Activated CD4-positive, alpha-beta memory T cell treated with anti-CD3 and anti-CD28 coated beads for 36 hours (primary cell): ENCODE measurements at regions of chr10 and their contacts with region 1.

Region 1: DNA sequence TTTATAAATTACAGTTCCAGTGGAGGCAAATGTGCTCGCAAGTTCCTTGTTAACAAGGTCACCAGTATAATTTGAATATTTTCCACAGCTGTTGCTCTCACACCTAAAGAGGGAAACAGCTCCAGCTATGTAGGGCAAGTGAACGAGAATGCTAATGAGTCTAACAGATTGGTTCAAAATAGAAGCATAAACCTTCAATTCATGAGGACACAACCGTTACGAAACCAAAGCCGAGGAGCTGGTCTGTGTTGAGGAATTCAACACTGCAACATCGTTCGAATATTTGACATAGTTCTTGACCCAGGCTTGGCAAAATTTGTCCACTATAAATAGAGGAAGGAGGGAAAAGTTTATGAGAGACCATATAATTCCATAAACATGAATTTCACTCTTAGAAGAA is 161.3 kb downstream of the KLF6 start:
- DNase-seq: no peak
- H3K4me3 Mint-ChIP-seq: no peak overlapping the region
- H3K27ac Mint-ChIP-seq: peak overlapping the region; percentile 83
- H3K4me1 Mint-ChIP-seq: peaks cover 28% of the 10 kb centered on the region
- H3K27me3 Mint-ChIP-seq: no peaks in the 10 kb centered on the region

Region 2: DNA sequence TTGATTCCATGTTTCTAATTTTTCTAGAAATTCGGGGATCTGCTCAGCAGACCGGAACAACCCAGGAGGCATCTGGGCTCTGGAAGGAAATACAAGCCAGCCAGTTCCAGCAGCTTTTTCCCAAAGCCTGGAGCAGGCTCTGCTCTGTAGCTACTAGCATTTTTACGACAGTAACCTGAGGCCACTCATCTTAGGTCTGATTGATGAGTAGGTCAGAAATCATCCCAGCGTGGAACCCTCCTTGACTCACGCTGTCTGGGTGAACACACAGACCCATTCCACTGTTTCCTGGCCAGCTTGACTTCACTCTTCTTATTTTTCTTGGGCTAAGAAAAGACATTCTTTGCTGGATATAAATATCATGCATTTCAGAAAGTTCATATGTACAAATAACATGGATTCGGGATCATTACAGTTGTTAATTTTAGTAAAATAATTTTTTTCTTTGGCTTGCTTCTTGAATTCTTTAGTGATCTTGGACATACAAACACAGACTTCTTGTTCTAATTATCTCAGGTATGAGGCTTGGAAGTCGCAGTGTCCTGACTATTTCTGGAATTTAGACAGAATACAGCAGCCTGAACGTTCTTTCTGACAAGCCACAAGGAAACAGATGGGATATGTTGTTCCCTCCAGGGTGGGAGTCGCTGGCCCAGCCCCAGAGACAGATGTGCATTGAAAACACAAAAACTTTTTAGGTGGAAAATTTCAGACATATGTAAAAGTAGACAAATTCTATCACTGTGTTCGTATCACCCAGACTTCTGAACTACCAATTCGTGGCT is 396.6 kb before region 1 on chr10:
- CTCF ChIA-PET with region 1: no interaction called
- POLR2A ChIA-PET with region 1: no interaction called
- intact Hi-C with region 1: loop called (anchors 2 kb)
- DNase-seq: no peak
- H3K4me3 Mint-ChIP-seq: no peak overlapping the region
- H3K27ac Mint-ChIP-seq: no peak overlapping the region
- H3K4me1 Mint-ChIP-seq: peaks cover 23% of the 10 kb centered on the region
- H3K27me3 Mint-ChIP-seq: peaks cover 5% of the 10 kb centered on the region

Region 3: DNA sequence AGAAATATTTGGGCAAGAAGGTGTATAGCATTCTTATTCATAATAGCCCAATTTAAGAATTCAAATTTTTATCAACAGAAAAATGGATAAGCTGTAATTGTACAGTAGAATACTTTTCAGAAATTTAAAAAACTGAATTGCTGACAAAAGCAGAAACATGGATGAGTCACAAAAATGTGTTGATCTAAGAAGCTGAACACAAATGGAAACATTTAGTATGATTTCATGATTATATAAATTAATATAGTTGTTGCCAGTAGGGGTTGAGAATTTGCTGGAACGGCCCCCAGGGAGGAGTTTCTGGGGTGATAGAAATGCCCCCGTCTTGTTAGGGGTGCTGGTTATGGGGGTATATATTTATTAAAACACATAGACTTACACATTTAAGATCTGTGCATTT is 17.9 kb before region 1 on chr10:
- CTCF ChIA-PET with region 1: interaction called, 4 read pairs
- POLR2A ChIA-PET with region 1: no interaction called
- intact Hi-C with region 1: loop called (anchors 1 kb)
- DNase-seq: peak; percentile 20
- H3K4me3 Mint-ChIP-seq: no peak overlapping the region
- H3K27ac Mint-ChIP-seq: peak overlapping the region; percentile 55
- H3K4me1 Mint-ChIP-seq: peaks cover 18% of the 10 kb centered on the region
- H3K27me3 Mint-ChIP-seq: no peaks in the 10 kb centered on the region

Region 4: GRCh38 chr10:3740157-3740871 is 116.6 kb after region 1 on chr10:
- CTCF ChIA-PET with region 1: no interaction called
- POLR2A ChIA-PET with region 1: interaction called, 4 read pairs
- intact Hi-C with region 1: loop called (anchors 1 kb)
- DNase-seq: peak; percentile 57
- H3K4me3 Mint-ChIP-seq: peak overlapping the region; percentile 43
- H3K27ac Mint-ChIP-seq: peak overlapping the region; percentile 82
- H3K4me1 Mint-ChIP-seq: peaks cover 28% of the 10 kb centered on the region
- H3K27me3 Mint-ChIP-seq: no peaks in the 10 kb centered on the region

Region 5: DNA sequence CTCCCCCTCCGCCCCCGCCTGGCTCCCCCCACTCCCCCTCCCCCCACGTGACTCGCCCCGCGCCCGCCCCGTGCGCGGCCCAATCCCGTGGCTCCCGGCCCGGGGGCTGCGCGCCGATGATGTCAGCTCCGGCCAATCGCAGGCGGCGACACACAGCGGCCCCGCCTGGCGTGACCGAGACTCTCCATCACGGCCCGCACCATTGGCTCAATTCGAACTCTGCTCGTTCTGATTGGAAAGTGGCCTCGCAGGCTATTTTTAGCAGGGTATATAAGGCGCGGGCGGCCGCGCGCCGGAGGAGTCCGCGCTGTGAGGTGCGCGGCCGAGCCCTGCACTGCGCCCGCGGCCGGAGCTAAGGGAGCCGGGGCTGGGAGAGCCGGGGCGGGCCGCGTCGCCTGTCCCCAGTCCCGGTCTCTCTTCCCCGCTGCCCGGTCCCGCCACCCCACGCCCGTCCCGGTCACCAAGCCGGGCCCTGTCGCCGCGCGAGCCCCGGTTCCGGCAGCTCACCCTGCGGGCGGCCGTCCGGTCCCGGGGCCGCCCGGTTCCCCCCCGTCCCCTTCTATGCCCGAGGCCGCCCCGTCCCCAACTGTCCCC is 161.6 kb after region 1 on chr10:
- CTCF ChIA-PET with region 1: interaction called, 3 read pairs
- POLR2A ChIA-PET with region 1: interaction called, 10 read pairs
- intact Hi-C with region 1: loop called (anchors 1 kb)
- DNase-seq: peak; percentile 100
- H3K4me3 Mint-ChIP-seq: peak overlapping the region; percentile 96
- H3K27ac Mint-ChIP-seq: peak overlapping the region; percentile 98
- H3K4me1 Mint-ChIP-seq: peaks cover 27% of the 10 kb centered on the region
- H3K27me3 Mint-ChIP-seq: peaks cover 2% of the 10 kb centered on the region

Region 6: GRCh38 chr10:3935141-3935540 is 311.4 kb after region 1 on chr10:
- CTCF ChIA-PET with region 1: interaction called, 3 read pairs
- POLR2A ChIA-PET with region 1: no interaction called
- intact Hi-C with region 1: loop called (anchors 5 kb)
- DNase-seq: peak; percentile 95
- H3K4me3 Mint-ChIP-seq: peak overlapping the region; percentile 42
- H3K27ac Mint-ChIP-seq: peak overlapping the region; percentile 92
- H3K4me1 Mint-ChIP-seq: peaks cover 49% of the 10 kb centered on the region
- H3K27me3 Mint-ChIP-seq: no peaks in the 10 kb centered on the region

Region 7: GRCh38 chr10:4656576-4657182 is 1032.9 kb after region 1 on chr10:
- CTCF ChIA-PET with region 1: no interaction called
- POLR2A ChIA-PET with region 1: no interaction called
- intact Hi-C with region 1: loop called (anchors 2 kb)
- DNase-seq: peak; percentile 63
- H3K4me3 Mint-ChIP-seq: no peak overlapping the region
- H3K27ac Mint-ChIP-seq: no peak overlapping the region
- H3K4me1 Mint-ChIP-seq: peaks cover 16% of the 10 kb centered on the region
- H3K27me3 Mint-ChIP-seq: peaks cover 6% of the 10 kb centered on the region